HEK293T (cell line): ENCODE measurements at regions of chrX and their contacts with region 1.

Region 1: GRCh38 chrX:47233337-47234113 is 716 bp downstream of the USP11 start:
- DNase-seq: peak; percentile 87

Region 2: GRCh38 chrX:47179221-47179920 is 54.2 kb before region 1 on chrX:
- CTCF ChIA-PET with region 1: no interaction called
- POLR2A ChIA-PET with region 1: no interaction called
- DNase-seq: no peak

Region 3: DNA sequence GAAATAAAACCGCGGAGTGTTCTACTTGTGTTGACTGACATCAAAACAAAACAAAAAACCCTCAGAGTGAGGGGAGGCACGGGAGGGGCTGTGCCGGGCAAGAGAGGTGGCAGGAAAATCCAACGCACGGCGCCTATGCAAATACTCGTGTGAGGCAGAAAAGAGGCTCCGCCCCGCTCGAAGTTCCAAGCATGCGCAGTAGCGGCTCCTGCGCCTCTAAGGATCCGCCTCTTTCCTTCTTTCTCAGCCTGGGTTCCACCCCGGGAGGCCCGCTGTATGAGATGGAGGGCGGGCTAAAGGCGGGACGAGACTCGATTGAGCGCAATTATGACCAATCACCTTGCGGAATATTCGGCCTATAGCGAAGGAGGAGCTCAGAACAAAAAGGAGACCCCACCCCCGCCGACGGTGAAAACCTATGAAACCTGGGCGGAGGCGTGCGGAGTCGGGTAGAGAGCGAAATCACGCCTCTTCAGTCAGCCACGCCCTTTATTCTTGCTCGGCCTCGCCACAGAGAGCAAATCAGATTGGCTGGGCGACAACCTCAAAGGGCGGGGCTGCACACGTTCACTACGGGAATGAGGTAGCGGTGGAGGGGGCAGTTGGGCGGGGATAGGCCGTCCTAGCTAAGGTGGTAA is 15.8 kb before region 1 on chrX:
- CTCF ChIA-PET with region 1: no interaction called
- POLR2A ChIA-PET with region 1: interaction called, 21 read pairs
- DNase-seq: peak; percentile 93

Region 4: GRCh38 chrX:47373198-47373597 is 139.7 kb after region 1 on chrX:
- CTCF ChIA-PET with region 1: no interaction called
- POLR2A ChIA-PET with region 1: no interaction called
- DNase-seq: no peak

Region 5: GRCh38 chrX:47384502-47384901 is 151.0 kb after region 1 on chrX:
- CTCF ChIA-PET with region 1: no interaction called
- POLR2A ChIA-PET with region 1: interaction called, 10 read pairs
- DNase-seq: peak; percentile 61

Region 6: DNA sequence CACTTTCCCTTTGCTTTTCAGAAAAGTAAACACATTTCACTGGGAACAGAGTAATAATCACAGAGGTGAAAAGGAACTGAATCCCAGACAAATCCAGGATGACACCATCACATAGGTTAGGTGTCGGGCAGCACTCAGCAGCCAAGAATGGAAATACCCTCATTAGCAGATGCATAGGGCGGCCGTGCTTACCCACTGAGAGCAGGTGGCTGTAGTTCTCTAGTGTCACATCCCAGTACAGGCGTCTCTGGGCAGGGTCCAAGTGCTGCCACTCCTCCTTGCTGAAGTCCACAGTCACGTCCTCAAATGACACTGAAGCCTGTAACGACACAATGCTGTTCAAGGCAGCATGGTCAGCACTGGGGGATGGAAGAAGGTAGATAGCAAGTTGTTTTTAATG is 222.6 kb after region 1 on chrX:
- CTCF ChIA-PET with region 1: no interaction called
- POLR2A ChIA-PET with region 1: no interaction called
- DNase-seq: no peak

Region 7: DNA sequence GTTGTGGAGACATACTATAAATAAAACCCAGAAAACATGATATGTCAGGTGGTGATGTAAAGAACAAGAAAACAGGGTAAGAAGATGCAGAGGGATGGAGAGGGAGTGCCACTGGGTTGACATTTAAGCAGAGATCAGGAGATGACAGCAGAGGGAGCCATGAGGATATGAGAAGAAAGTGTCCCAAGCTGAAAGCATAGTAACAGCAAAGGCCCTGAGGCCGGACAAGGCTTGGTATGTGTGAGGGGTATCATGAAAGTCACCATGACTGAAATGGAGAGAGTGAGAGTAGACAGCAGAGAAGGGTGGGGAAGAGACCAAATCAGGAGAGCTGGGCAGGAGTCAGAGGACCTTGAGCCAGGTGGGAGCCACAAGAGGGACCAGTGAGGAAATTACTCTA is 1886.6 kb after region 1 on chrX:
- CTCF ChIA-PET with region 1: no interaction called
- POLR2A ChIA-PET with region 1: no interaction called
- DNase-seq: no peak